G401 (cell line): ENCODE measurements at regions of chr5 and their contacts with region 1.

Region 1: GRCh38 chr5:69042915-69043658 is 50.7 kb upstream of the SLC30A5 start:
- DNase-seq: peak; percentile 94

Region 2: GRCh38 chr5:68953875-68954617 is 89.0 kb before region 1 on chr5:
- in situ Hi-C with region 1: no loop called
- DNase-seq: no peak

Region 3: GRCh38 chr5:69374911-69375446 is 331.9 kb after region 1 on chr5:
- in situ Hi-C with region 1: loop called (anchors 25 kb)
- DNase-seq: no peak